GM12878 (cell line): ENCODE measurements at regions of chr4 and their contacts with region 1.

Region 1: GRCh38 chr4:70927502-70928137 is 25.5 kb downstream of the MOB1B start:
- DNase-seq: no peak
- ATAC-seq: peak; percentile 56
- H3K4me3 ChIP-seq: peak overlapping the region; percentile 43; the same call in 1 of the 2 replicates
- H3K27ac ChIP-seq: peak overlapping the region; percentile 54
- H3K4me1 ChIP-seq: peaks cover 36% of the 10 kb centered on the region
- H3K27me3 ChIP-seq: no peaks in the 10 kb centered on the region
- CTCF ChIP-seq: peak in 2 of 3 experiments; percentile 14 to 35; a peak in 3 of 6 replicates
- EP300 ChIP-seq: no peak
- POLR2A ChIP-seq: no peak
- RAD21 ChIP-seq: peak; percentile 36; the same call in 1 of the 2 replicates

Region 2: DNA sequence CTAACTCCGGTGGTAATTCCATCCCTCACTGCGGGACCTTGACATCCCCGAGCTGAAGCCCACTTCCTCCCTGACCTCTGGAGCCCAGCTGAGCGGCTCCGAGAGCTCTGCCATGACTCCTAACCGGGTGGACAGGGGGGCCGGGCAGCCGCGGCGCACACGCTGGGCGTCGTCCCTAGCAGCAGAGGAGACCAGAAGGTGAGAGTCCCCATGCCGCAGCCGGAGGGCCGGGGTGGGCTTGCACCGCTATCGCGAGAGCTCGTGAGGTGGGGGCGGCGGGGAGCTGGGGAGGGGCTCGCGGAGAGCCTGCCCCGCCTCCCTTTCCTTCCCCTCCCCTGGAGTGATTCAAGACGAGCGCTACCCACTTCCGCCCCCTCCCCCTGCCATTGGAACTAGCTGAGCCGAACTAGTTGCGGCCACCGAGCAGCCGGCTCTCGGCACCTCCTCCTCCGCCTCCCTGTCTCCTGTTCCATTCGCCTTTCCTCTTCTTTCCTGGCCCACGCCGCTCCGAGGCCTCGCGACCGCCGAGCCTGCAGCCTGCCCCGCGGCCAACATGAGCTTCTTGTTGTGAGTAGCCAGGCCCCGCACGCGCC is 25.5 kb before region 1 on chr4 and contains the start of gene MOB1B:
- CTCF ChIA-PET with region 1: interaction called, 4 read pairs
- POLR2A ChIA-PET with region 1: interaction called, 4 read pairs
- RAD21 ChIA-PET with region 1: interaction called, 7 read pairs
- SMC1A ChIA-PET with region 1: interaction called, 10 read pairs
- in situ Hi-C with region 1: no loop called
- intact Hi-C with region 1: no loop called
- DNase-seq: peak; percentile 34
- ATAC-seq: peak; percentile 94
- H3K4me3 ChIP-seq: peak within 1 kb of the TSS; percentile 99
- H3K27ac ChIP-seq: peak within 1 kb of the TSS; percentile 53
- H3K4me1 ChIP-seq: no peaks in the 10 kb centered on the region
- H3K27me3 ChIP-seq: no peaks in the 10 kb centered on the region
- CTCF ChIP-seq: peak; percentile 23 to 49 (median 41); a peak in 4 of 6 replicates
- EP300 ChIP-seq: no peak
- POLR2A ChIP-seq: peak; percentile 83
- RAD21 ChIP-seq: peak; percentile 51
- polyA plus RNA-seq, gene MOB1B: 1.9 TPM

Region 3: DNA sequence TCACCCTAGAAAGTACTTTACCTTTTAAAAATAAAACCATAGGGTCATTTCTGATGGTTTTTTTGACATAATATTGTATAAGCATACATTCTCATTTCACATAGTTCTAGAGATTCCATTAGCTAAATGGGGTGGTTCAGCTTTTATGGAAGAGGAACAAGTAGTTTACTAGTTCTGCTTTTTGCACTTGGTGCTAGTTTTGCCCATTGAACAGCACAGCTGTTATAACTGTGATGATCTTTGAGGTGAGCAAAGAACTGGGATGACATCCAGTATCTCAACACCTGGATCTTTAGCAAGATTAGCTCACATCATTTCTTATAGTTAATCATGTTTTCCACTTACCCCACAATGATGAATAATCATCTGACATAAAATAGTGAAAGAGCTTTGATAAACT is 15.5 kb after region 1 on chr4:
- CTCF ChIA-PET with region 1: interaction called, 4 read pairs
- POLR2A ChIA-PET with region 1: interaction called, 3 read pairs
- RAD21 ChIA-PET with region 1: interaction called, 5 read pairs
- SMC1A ChIA-PET with region 1: interaction called, 31 read pairs
- in situ Hi-C with region 1: no loop called
- intact Hi-C with region 1: no loop called
- DNase-seq: no peak
- ATAC-seq: peak; percentile 87
- H3K4me3 ChIP-seq: no peak overlapping the region
- H3K27ac ChIP-seq: no peak overlapping the region
- H3K4me1 ChIP-seq: no peaks in the 10 kb centered on the region
- H3K27me3 ChIP-seq: no peaks in the 10 kb centered on the region
- CTCF ChIP-seq: no peak
- EP300 ChIP-seq: no peak
- POLR2A ChIP-seq: no peak
- RAD21 ChIP-seq: no peak